Endothelial cell of umbilical vein (primary cell): ENCODE measurements at regions of chrX and their contacts with region 1.

Region 1: DNA sequence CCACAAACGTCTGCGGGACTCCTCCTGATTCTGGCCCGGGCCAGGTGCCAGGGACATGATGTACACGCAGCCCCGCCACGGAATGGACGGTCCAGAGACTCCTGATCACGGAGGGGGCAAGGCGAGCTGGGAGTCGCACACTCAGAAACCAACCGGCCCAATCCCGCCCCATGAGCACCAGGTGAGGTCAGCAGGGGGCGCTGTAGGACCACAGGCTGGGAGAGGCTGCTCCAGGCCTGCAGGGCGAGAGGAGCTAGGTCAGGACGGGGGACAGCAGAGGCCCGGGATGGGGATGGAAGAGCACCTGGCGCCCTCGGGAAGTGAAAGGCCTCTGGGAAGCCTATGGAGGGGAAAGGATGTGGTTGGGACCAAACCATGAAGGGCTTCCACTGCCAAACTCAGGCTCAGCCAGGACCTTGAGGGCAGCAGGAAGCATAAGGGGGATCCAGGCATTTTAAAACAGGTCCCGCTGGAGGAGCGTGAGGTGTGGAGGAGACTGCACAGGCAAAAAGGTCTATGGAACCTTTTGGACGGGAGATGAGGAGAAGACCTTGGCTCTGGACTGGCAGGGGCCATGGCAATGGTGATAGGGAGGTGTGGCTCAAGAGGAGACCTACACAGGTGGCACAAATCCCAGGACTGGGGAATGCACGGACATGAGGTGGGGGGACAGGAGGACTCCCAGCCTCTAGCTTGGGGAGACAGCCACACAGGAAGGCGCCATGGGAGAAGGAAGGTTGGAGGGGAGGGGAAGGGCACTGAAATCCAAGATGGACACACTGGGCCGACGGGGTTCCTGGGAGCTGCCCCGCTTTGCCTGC is 79.2 kb downstream of the MTMR1 start:
- DNase-seq: peak; percentile 45
- H3K4me3 ChIP-seq: no peak overlapping the region
- H3K27ac ChIP-seq: no peak overlapping the region
- H3K4me1 ChIP-seq: no peaks in the 10 kb centered on the region
- H3K27me3 ChIP-seq: no peaks in the 10 kb centered on the region
- CTCF ChIP-seq: peak; percentile 64 to 82
- POLR2A ChIP-seq: no peak

Region 2: DNA sequence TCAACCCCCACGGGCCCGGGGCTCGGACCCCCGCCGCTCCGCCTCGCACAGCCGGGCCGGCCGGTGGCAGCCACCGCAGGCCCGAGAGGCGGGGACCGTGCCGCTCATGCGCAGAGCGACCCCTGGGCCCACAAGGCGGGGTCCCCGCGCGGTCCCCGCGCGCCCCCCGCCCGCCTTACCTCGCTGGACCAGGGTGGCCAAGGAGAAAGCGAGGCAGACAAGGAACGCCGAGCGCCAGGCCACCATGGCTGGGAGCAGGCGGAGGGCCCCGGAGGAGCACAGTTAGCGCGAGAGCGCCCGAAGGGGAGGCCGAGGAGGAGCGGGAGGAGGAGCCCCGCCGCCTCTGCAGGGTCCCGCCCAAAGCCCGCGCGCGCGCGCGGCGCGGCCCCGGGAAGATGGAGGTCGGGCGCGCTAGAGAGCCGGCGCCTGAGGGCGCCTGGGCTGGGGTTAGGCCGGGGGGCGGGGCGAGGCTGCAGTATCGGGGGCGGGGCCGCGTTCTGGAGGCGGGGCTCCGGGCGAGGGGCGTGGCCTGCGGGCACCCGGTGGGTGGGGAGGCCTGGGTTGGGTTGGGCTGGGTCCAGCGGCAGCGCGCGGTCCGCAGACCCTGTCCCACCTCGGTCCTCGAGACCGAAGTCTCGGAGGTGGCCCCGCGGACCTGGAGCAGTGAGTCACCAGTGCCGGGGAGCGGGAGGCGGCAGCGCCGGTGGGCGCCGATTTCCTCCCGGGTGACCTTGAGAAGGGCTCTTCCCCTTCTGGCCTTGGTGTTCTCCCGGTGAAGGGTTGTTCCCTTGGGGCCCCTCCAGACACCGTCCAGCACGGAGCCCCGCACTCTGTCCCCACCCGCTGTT is 126.2 kb after region 1 on chrX and contains the start of gene CD99L2:
- CTCF ChIA-PET with region 1: interaction called, 3 read pairs
- POLR2A ChIA-PET with region 1: no interaction called
- dilution Hi-C with region 1: no loop called
- intact Hi-C with region 1: loop called (anchors 5 kb)
- DNase-seq: peak; percentile 80
- H3K4me3 ChIP-seq: peak within 1 kb of the TSS; percentile 56 to 74 (median 58)
- H3K27ac ChIP-seq: peak within 1 kb of the TSS; percentile 45
- H3K4me1 ChIP-seq: peaks cover 7% of the 10 kb centered on the region
- H3K27me3 ChIP-seq: no peaks in the 10 kb centered on the region
- CTCF ChIP-seq: no peak
- POLR2A ChIP-seq: peak; percentile 54
- total RNA-seq, gene CD99L2: 32.4 and 33.2 TPM in 2 replicates

Region 3: GRCh38 chrX:150982788-150983520 is 210.6 kb after region 1 on chrX and contains the start of gene HMGB3:
- CTCF ChIA-PET with region 1: interaction called, 4 read pairs
- POLR2A ChIA-PET with region 1: no interaction called
- dilution Hi-C with region 1: no loop called
- intact Hi-C with region 1: loop called (anchors 1 kb)
- DNase-seq: peak; percentile 92
- H3K4me3 ChIP-seq: peak within 1 kb of the TSS; percentile 56 to 65 (median 56)
- H3K27ac ChIP-seq: peak within 1 kb of the TSS; percentile 53
- H3K4me1 ChIP-seq: peaks cover 7% of the 10 kb centered on the region
- H3K27me3 ChIP-seq: no peaks in the 10 kb centered on the region
- CTCF ChIP-seq: no peak
- POLR2A ChIP-seq: no peak
- total RNA-seq, gene HMGB3: 124 and 127 TPM in 2 replicates

Region 4: DNA sequence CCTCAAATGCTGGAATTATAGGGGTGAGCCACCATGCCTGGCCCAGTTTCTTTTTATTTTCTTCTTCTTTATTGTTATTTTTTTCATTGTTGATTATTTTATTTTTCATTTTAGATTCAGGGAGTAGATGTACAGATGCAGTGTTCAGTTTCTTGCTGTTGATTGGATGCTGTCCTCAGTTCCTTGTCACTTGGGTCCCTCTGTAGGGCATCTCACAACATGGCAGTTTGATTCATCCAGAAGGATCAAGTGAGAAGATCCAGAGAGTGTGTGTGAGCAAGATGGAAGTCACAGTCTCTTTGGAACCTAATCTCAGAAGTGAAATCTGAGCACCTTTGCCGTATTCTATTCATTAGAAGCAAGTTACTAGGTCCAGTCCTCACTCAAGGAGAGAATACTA is 231.7 kb after region 1 on chrX:
- CTCF ChIA-PET with region 1: interaction called, 28 read pairs
- POLR2A ChIA-PET with region 1: no interaction called
- dilution Hi-C with region 1: no loop called
- intact Hi-C with region 1: no loop called
- DNase-seq: no peak
- H3K4me3 ChIP-seq: no peak overlapping the region
- H3K27ac ChIP-seq: no peak overlapping the region
- H3K4me1 ChIP-seq: no peaks in the 10 kb centered on the region
- H3K27me3 ChIP-seq: no peaks in the 10 kb centered on the region
- CTCF ChIP-seq: peak in 1 of 2 donors; percentile 12
- POLR2A ChIP-seq: no peak

Region 5: GRCh38 chrX:151082076-151082948 is 310.0 kb after region 1 on chrX:
- CTCF ChIA-PET with region 1: interaction called, 315 read pairs
- POLR2A ChIA-PET with region 1: no interaction called
- dilution Hi-C with region 1: no loop called
- intact Hi-C with region 1: loop called (anchors 1 kb)
- DNase-seq: peak; percentile 42
- H3K4me3 ChIP-seq: no peak overlapping the region
- H3K27ac ChIP-seq: no peak overlapping the region
- H3K4me1 ChIP-seq: no peaks in the 10 kb centered on the region
- H3K27me3 ChIP-seq: no peaks in the 10 kb centered on the region
- CTCF ChIP-seq: peak; percentile 78 to 83
- POLR2A ChIP-seq: no peak